Sigmoid colon (tissue), 7 donors: ENCODE measurements at regions of chr1 and their contacts with region 1.

Region 1: GRCh38 chr1:214584805-214585766 is 17.9 kb upstream of the CENPF start:
- DNase-seq: no peak
- H3K4me3 ChIP-seq: no peak overlapping the region
- H3K27ac ChIP-seq: peak overlapping the region in 2 of 4 donors; percentile 55 to 64
- H3K4me1 ChIP-seq: peaks cover 0 to 30% (median 14%) of the 10 kb centered on the region in 4 donors
- H3K27me3 ChIP-seq: no peaks in the 10 kb centered on the region
- CTCF ChIP-seq: peak; percentile 46 to 81 (median 76)
- EP300 ChIP-seq: no peak
- POLR2A ChIP-seq: no peak

Region 2: GRCh38 chr1:214261206-214262123 is 323.6 kb before region 1 on chr1:
- intact Hi-C with region 1: loop called (anchors 5 kb)
- DNase-seq: peak; percentile 88
- H3K4me3 ChIP-seq: no peak overlapping the region
- H3K27ac ChIP-seq: no peak overlapping the region
- H3K4me1 ChIP-seq: peaks cover 0 to 6% (median 0%) of the 10 kb centered on the region in 4 donors
- H3K27me3 ChIP-seq: peaks cover 0 to 44% (median 5%) of the 10 kb centered on the region in 3 donors
- CTCF ChIP-seq: peak; percentile 76 to 95 (median 84)
- EP300 ChIP-seq: no peak
- POLR2A ChIP-seq: no peak

Region 3: GRCh38 chr1:214389734-214390133 is 195.4 kb before region 1 on chr1:
- intact Hi-C with region 1: loop called (anchors 2 kb)
- DNase-seq: no peak
- H3K4me3 ChIP-seq: no peak overlapping the region
- H3K27ac ChIP-seq: no peak overlapping the region
- H3K4me1 ChIP-seq: peaks cover 0 to 10% (median 0%) of the 10 kb centered on the region in 4 donors
- H3K27me3 ChIP-seq: no peaks in the 10 kb centered on the region
- CTCF ChIP-seq: no peak
- EP300 ChIP-seq: no peak
- POLR2A ChIP-seq: no peak